Activated B cell treated with CpG ODN at 0.5 μM for 24 hours (primary cell): ENCODE measurements at regions of chr15 and their contacts with region 1.

Region 1: GRCh38 chr15:41894791-41895463 is 1.1 kb upstream of the SPTBN5 start:
- DNase-seq: peak; percentile 68
- ATAC-seq: peak; percentile 99
- H3K4me3 Mint-ChIP-seq: peak overlapping the region; percentile 79
- H3K27ac Mint-ChIP-seq: peak overlapping the region; percentile 81
- H3K4me1 Mint-ChIP-seq: peaks cover 44% of the 10 kb centered on the region
- H3K27me3 Mint-ChIP-seq: no peaks in the 10 kb centered on the region
- CTCF ChIP-seq: no peak

Region 2: DNA sequence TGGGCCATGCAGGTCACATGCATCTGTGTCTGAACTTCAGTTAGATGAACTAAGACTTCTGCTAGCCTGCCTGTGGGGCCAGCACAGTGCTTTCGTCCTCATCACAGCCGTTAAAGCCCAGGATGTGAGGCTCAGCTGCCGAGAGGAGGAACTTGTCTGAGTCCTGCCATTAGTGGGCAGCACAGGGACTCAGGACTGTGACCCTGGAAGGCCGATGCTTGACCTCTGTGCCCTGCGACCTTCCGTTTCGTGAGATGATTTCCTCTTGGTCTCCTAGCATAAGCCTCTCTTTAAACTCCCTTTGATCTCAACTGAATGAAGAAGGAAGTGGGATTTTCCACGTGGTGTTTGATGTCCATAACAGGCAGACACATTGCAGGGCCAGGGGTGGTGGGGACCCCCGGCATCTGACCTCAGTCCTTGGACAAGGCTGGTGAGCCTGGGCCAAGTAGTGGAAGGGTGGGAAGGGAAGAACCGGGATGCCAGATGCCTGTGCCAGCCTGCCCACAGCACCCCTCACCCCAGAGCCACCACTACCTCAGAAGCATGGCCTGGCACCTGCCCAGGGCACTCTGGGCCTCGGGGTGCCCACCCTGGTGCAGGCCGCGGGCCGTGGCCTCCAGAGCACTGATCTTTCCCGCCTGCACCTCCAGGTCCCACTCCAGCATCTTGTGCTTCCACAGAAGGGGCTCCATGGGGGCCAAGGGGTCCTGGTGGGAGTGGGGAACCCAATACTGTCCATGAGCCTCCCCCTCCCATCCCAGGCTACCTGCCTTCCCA is 34.7 kb before region 1 on chr15:
- CTCF ChIA-PET with region 1: no interaction called
- POLR2A ChIA-PET with region 1: no interaction called
- intact Hi-C with region 1: no loop called
- DNase-seq: no peak
- ATAC-seq: no peak
- H3K4me3 Mint-ChIP-seq: no peak overlapping the region
- H3K27ac Mint-ChIP-seq: no peak overlapping the region
- H3K4me1 Mint-ChIP-seq: no peaks in the 10 kb centered on the region
- H3K27me3 Mint-ChIP-seq: peaks cover 3% of the 10 kb centered on the region
- CTCF ChIP-seq: no peak

Region 3: DNA sequence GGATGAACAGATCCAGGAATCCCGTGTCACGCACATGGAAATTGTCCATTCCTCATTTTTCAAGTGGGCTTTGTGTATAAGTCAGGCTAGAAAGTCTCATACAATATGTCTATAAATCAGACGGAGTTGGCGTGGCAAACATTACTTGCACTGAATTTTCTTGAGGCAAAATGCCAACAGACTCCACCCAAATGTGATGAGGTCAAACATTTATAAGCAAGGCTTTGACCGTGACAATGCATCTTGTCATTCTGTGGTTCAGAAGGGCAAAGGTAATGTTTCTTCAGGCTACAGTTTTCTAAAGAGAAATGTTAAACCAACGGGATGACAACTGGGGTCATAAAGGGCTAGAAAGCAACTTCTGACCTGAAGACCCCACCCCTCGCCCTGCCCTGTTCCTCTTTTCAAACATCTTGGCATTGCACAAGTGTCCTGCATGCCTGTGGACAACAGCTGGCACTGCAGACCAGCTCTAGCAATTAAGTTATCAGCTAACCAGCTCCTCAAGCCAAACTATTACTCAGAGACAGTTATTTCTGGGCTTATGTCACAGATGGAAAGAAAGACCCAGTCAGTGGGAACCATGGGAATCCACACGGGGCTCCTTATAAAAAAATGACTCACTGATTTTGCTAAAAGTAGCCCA is 35.4 kb after region 1 on chr15:
- CTCF ChIA-PET with region 1: no interaction called
- POLR2A ChIA-PET with region 1: interaction called, 8 read pairs
- intact Hi-C with region 1: loop called (anchors 2 kb)
- DNase-seq: no peak
- ATAC-seq: no peak
- H3K4me3 Mint-ChIP-seq: peak overlapping the region; percentile 65
- H3K27ac Mint-ChIP-seq: peak overlapping the region; percentile 88
- H3K4me1 Mint-ChIP-seq: peaks cover 86% of the 10 kb centered on the region
- H3K27me3 Mint-ChIP-seq: no peaks in the 10 kb centered on the region
- CTCF ChIP-seq: no peak